Ovary (tissue), 10 donors: ENCODE measurements at regions of chr7 and their contacts with region 1.

Region 1: GRCh38 chr7:37448636-37449361 is at the start of gene ELMO1:
- DNase-seq: peak; percentile 62 to 80 (median 72)
- H3K4me3 ChIP-seq: peak within 1 kb of the TSS; percentile 49
- H3K27ac ChIP-seq: peak within 1 kb of the TSS; percentile 65 to 67
- H3K4me1 ChIP-seq: peaks cover 3% of the 10 kb centered on the region
- H3K27me3 ChIP-seq: no peaks in the 10 kb centered on the region
- CTCF ChIP-seq: peak in 2 of 3 donors; percentile 57 to 60
- EP300 ChIP-seq: no peak
- POLR2A ChIP-seq: no peak
- total RNA-seq, gene ELMO1: 17.6 to 48.9 (median 28.0) TPM

Region 2: GRCh38 chr7:37211097-37211880 is 237.5 kb before region 1 on chr7:
- intact Hi-C with region 1: loop called in 1 of 4 experiments (anchors 10 kb)
- DNase-seq: peak in 4 of 5 donors; percentile 44 to 69 (median 58)
- H3K4me3 ChIP-seq: no peak overlapping the region
- H3K27ac ChIP-seq: peak overlapping the region; percentile 13 to 18
- H3K4me1 ChIP-seq: peaks cover 1% of the 10 kb centered on the region
- H3K27me3 ChIP-seq: no peaks in the 10 kb centered on the region
- CTCF ChIP-seq: no peak
- EP300 ChIP-seq: no peak
- POLR2A ChIP-seq: no peak

Region 3: GRCh38 chr7:37284805-37285231 is 164.0 kb before region 1 on chr7:
- intact Hi-C with region 1: loop called in 1 of 4 experiments (anchors 10 kb)
- DNase-seq: peak; percentile 63 to 87 (median 76)
- H3K4me3 ChIP-seq: no peak overlapping the region
- H3K27ac ChIP-seq: peak overlapping the region in 1 of 2 donors; percentile 17
- H3K4me1 ChIP-seq: peaks cover 25% of the 10 kb centered on the region
- H3K27me3 ChIP-seq: no peaks in the 10 kb centered on the region
- CTCF ChIP-seq: peak; percentile 23 to 40 (median 33)
- EP300 ChIP-seq: no peak
- POLR2A ChIP-seq: no peak

Region 4: DNA sequence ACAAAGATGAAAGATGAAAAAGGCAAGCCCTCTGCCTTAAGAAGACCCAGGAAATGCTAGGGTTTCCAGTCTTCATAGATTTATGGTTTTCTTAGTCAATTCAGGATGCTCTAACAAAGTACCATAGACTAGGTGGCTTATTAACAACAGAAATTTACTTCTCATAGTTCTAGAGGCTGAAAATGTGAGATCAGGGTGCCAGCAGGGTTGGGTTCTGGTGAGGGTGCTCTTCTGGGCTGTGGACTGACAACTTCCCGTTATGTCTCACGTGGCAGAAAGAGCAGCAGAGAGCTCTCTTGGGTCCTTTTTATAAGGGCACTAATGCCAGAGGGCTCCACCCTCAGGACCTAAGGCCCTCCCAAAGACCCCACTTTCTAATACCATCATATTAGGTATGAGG is 23.8 kb before region 1 on chr7:
- intact Hi-C with region 1: no loop called
- DNase-seq: no peak
- H3K4me3 ChIP-seq: no peak overlapping the region
- H3K27ac ChIP-seq: no peak overlapping the region
- H3K4me1 ChIP-seq: peaks cover 8% of the 10 kb centered on the region
- H3K27me3 ChIP-seq: no peaks in the 10 kb centered on the region
- CTCF ChIP-seq: no peak
- EP300 ChIP-seq: no peak
- POLR2A ChIP-seq: no peak